Posterior vena cava (tissue), 2 donors: ENCODE measurements at regions of chr17 and their contacts with region 1.

Region 1: GRCh38 chr17:42019509-42020404 is at the start of gene NKIRAS2:
- DNase-seq: peak; percentile 99
- total RNA-seq, gene NKIRAS2: 28.3 TPM

Region 2: GRCh38 chr17:43994272-43995149 is 1974.8 kb after region 1 on chr17:
- intact Hi-C with region 1: loop called in 1 of 2 experiments (anchors 5 kb)
- DNase-seq: peak; percentile 91